ENCODE measurements at regions of chr13 and their contacts with region 1.

Region 1: GRCh38 chr13:30465585-30466357 is at the start of gene HMGB1:
- DNase-seq: peak; percentile 84 to 98 (median 96)
- ATAC-seq: peak; percentile 90
- H3K4me3 ChIP-seq: peak within 1 kb of the TSS; percentile 83
- H3K4me3 Mint-ChIP-seq: peak within 1 kb of the TSS; percentile 86 to 99 (median 94)
- H3K27ac ChIP-seq: peak within 1 kb of the TSS; percentile 97
- H3K27ac Mint-ChIP-seq: peak within 1 kb of the TSS; percentile 93 to 100 (median 98)
- H3K4me1 ChIP-seq: peaks cover 23 to 32% of the 10 kb centered on the region in 2 donors
- H3K4me1 Mint-ChIP-seq: peaks cover 12 to 40% (median 30%) of the 10 kb centered on the region in 7 donors
- H3K27me3 ChIP-seq: no peaks in the 10 kb centered on the region
- H3K27me3 Mint-ChIP-seq: peaks cover 0 to 7% (median 0%) of the 10 kb centered on the region in 5 donors
- total RNA-seq, gene HMGB1: 294 to 530 (median 319) TPM

Region 2: DNA sequence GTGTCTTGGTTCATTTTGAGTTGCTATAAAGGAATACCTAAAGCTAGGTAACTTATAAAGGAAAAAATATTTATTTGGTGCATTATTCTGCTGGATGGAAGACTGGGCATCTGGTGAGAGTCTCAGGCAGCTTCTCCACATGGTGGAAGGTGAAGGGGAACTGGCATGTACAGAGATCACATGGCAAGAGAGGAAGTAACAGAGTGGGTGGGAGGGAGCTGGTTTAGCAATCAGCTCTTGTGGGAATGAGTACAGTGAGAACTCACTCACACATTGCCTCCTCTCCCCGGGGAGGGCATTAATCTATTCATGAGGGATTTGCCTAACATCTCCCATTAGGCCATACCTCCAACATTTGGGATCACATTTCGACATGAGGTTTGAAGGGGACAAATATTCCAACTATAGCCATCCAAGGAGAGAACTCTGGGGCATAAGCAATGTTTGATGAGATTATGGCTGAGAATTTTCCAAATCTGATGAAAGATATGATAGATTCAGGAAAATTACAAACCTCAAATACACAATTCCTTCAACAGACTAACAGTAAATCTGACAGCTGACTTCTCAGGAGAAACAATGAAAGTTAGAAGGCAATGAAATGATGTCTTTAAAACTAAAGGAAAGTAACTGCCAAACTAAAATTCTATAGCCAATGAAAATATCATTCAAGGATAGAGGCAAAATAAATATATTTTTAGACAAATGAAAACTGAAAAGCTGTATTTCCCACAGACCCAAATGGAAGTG is 1593.2 kb before region 1 on chr13:
- CTCF ChIA-PET with region 1: no interaction called
- POLR2A ChIA-PET with region 1: no interaction called
- intact Hi-C with region 1: no loop called
- DNase-seq: no peak
- ATAC-seq: no peak
- H3K4me3 ChIP-seq: no peak overlapping the region
- H3K4me3 Mint-ChIP-seq: no peak overlapping the region
- H3K27ac ChIP-seq: no peak overlapping the region
- H3K27ac Mint-ChIP-seq: peak overlapping the region in 1 of 9 donors; percentile 17
- H3K4me1 ChIP-seq: no peaks in the 10 kb centered on the region
- H3K4me1 Mint-ChIP-seq: no peaks in the 10 kb centered on the region
- H3K27me3 ChIP-seq: no peaks in the 10 kb centered on the region
- H3K27me3 Mint-ChIP-seq: peaks cover 0 to 33% (median 6%) of the 10 kb centered on the region in 5 donors

Region 3: DNA sequence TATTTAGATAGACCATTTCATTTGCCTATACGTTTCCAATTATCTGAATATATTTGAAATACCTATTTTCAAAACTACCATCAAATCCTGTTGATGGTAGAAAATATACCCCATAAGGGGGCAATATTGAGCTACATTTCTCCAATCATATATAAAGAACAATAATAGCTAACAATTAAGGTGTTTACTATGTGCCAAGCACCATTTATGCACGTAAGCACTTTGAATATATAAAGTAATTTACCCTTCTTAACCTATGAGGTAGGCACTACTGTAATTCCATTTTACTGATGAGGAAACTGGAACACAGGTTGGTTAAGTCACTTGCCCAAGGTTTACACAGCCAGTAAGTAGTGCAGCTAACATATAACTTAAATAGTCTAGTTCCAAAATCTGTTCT is 694.5 kb before region 1 on chr13:
- CTCF ChIA-PET with region 1: interaction called, 4 read pairs
- POLR2A ChIA-PET with region 1: no interaction called
- intact Hi-C with region 1: loop called in 1 of 2 experiments (anchors 2 kb)
- DNase-seq: peak in 7 of 9 donors; percentile 31 to 67 (median 52)
- ATAC-seq: peak; percentile 77
- H3K4me3 ChIP-seq: no peak overlapping the region
- H3K4me3 Mint-ChIP-seq: no peak overlapping the region
- H3K27ac ChIP-seq: no peak overlapping the region
- H3K27ac Mint-ChIP-seq: peak overlapping the region in 1 of 9 donors; percentile 11
- H3K4me1 ChIP-seq: no peaks in the 10 kb centered on the region
- H3K4me1 Mint-ChIP-seq: peaks cover 0 to 14% (median 4%) of the 10 kb centered on the region in 7 donors
- H3K27me3 ChIP-seq: no peaks in the 10 kb centered on the region
- H3K27me3 Mint-ChIP-seq: no peaks in the 10 kb centered on the region

Region 4: DNA sequence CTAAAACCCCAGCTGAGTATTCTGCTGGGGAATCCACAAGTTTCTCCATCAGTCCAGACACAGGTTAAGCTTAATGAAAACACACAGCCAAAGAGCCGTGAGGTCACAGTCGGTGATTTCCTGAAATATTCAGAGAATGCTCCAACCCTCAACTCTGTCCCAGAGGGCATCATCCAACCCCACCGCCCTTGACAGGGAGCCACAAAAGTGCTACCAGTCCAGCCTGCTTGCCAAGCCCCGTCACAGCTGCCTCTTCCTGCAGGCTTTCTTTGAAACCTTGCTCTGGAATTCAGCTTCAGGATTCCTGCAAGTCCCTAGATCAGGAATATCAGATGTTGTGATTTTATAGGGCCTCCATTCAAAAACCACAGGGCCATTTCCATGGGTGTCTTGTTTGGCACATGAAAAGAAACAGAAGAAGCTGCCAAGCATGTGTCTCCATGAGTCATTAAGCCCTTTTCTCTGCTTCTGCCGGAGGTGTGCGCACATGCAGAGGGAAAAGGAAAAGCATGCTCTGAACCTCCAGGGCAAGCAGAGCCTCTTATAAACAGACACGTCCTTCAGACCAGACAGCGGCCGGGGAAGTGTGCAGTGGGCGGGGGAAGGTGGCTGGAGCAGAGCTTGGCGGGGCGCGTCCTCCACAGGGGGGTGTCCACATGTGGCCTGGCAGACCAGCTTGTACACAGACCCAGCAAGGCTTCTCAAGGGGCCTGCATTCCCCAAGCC is 323.1 kb before region 1 on chr13:
- CTCF ChIA-PET with region 1: interaction called, 5 read pairs
- POLR2A ChIA-PET with region 1: interaction called, 12 read pairs
- intact Hi-C with region 1: loop called (anchors 5 kb)
- DNase-seq: peak in 1 of 9 donors; percentile 49
- ATAC-seq: peak; percentile 41
- H3K4me3 ChIP-seq: no peak overlapping the region
- H3K4me3 Mint-ChIP-seq: peak overlapping the region in 4 of 10 donors; percentile 10 to 61 (median 29)
- H3K27ac ChIP-seq: no peak overlapping the region
- H3K27ac Mint-ChIP-seq: peak overlapping the region; percentile 45 to 93 (median 76)
- H3K4me1 ChIP-seq: peaks cover 25 to 47% of the 10 kb centered on the region in 2 donors
- H3K4me1 Mint-ChIP-seq: peaks cover 29 to 64% (median 60%) of the 10 kb centered on the region in 7 donors
- H3K27me3 ChIP-seq: no peaks in the 10 kb centered on the region
- H3K27me3 Mint-ChIP-seq: peaks cover 0 to 5% (median 0%) of the 10 kb centered on the region in 5 donors

Region 5: DNA sequence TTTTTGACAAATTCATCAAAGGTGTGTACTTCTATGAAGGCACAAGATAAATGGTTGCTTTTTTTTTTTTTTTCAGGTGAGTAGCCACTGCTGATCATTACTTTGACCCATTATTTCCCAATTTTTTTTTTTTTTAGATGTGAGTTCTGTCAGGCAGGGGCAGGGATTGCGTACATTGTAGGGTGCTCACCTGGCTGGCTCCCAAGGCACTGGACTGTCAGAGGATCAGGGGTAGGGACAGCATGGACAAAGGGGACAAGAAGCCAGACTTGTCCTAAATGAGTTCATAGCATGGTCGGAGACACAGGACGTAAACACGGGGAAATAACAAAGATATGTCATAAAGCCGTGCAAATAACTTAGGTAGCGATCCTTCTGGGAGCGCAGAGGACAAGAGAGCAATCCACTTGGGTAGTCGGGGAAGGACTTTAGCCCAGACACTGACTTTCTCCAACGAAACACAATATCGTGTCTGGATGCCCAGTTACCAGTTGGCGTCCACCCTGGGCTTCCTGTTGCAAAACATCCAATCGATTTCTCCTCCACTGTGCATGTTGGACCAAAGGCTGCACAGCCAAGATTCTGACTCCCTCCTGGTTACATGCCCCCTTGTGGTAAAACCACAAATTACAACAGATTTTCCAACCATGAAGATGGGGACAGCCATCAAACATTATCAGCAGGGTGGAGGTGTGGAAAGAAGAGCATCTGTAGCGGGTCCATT is 130.9 kb before region 1 on chr13:
- CTCF ChIA-PET with region 1: no interaction called
- POLR2A ChIA-PET with region 1: interaction called, 3 read pairs
- intact Hi-C with region 1: loop called in 1 of 2 experiments (anchors 1 kb)
- DNase-seq: peak in 5 of 9 donors; percentile 24 to 43 (median 37)
- ATAC-seq: peak; percentile 57
- H3K4me3 ChIP-seq: no peak overlapping the region
- H3K4me3 Mint-ChIP-seq: no peak overlapping the region
- H3K27ac ChIP-seq: no peak overlapping the region
- H3K27ac Mint-ChIP-seq: peak overlapping the region in 2 of 9 donors; percentile 8 to 9
- H3K4me1 ChIP-seq: peaks cover 0 to 8% of the 10 kb centered on the region in 2 donors
- H3K4me1 Mint-ChIP-seq: peaks cover 7 to 40% (median 19%) of the 10 kb centered on the region in 7 donors
- H3K27me3 ChIP-seq: no peaks in the 10 kb centered on the region
- H3K27me3 Mint-ChIP-seq: no peaks in the 10 kb centered on the region

Region 6: GRCh38 chr13:30408319-30409101 is 57.3 kb before region 1 on chr13:
- CTCF ChIA-PET with region 1: no interaction called
- POLR2A ChIA-PET with region 1: interaction called, 3 read pairs
- intact Hi-C with region 1: loop called (anchors 1 to 2 kb)
- DNase-seq: peak; percentile 78 to 89 (median 85)
- ATAC-seq: peak; percentile 97
- H3K4me3 ChIP-seq: peak overlapping the region; percentile 44
- H3K4me3 Mint-ChIP-seq: peak overlapping the region; percentile 64 to 78 (median 72)
- H3K27ac ChIP-seq: peak overlapping the region; percentile 52
- H3K27ac Mint-ChIP-seq: peak overlapping the region; percentile 51 to 87 (median 83)
- H3K4me1 ChIP-seq: peaks cover 9 to 14% of the 10 kb centered on the region in 2 donors
- H3K4me1 Mint-ChIP-seq: peaks cover 6 to 46% (median 37%) of the 10 kb centered on the region in 7 donors
- H3K27me3 ChIP-seq: no peaks in the 10 kb centered on the region
- H3K27me3 Mint-ChIP-seq: peaks cover 0 to 12% (median 0%) of the 10 kb centered on the region in 5 donors

Region 7: GRCh38 chr13:30572859-30573275 is 107.1 kb after region 1 on chr13:
- CTCF ChIA-PET with region 1: interaction called, 3 read pairs
- POLR2A ChIA-PET with region 1: interaction called, 6 read pairs
- intact Hi-C with region 1: loop called (anchors 1 to 2 kb)
- DNase-seq: peak in 7 of 9 donors; percentile 19 to 65 (median 49)
- ATAC-seq: peak; percentile 69
- H3K4me3 ChIP-seq: peak overlapping the region; percentile 55
- H3K4me3 Mint-ChIP-seq: peak overlapping the region; percentile 66 to 88 (median 81)
- H3K27ac ChIP-seq: peak overlapping the region; percentile 81
- H3K27ac Mint-ChIP-seq: peak overlapping the region; percentile 88 to 97 (median 94)
- H3K4me1 ChIP-seq: peaks cover 13 to 24% of the 10 kb centered on the region in 2 donors
- H3K4me1 Mint-ChIP-seq: peaks cover 14 to 42% (median 36%) of the 10 kb centered on the region in 7 donors
- H3K27me3 ChIP-seq: no peaks in the 10 kb centered on the region
- H3K27me3 Mint-ChIP-seq: peaks cover 0 to 3% (median 0%) of the 10 kb centered on the region in 5 donors

Region 8: GRCh38 chr13:31044377-31045285 is 578.9 kb after region 1 on chr13:
- CTCF ChIA-PET with region 1: no interaction called
- POLR2A ChIA-PET with region 1: no interaction called
- intact Hi-C with region 1: loop called in 1 of 2 experiments (anchors 1 kb)
- DNase-seq: peak; percentile 54 to 79 (median 75)
- ATAC-seq: peak; percentile 95
- H3K4me3 ChIP-seq: no peak overlapping the region
- H3K4me3 Mint-ChIP-seq: peak overlapping the region in 9 of 10 donors; percentile 19 to 81 (median 52)
- H3K27ac ChIP-seq: no peak overlapping the region
- H3K27ac Mint-ChIP-seq: peak overlapping the region in 5 of 9 donors; percentile 7 to 90 (median 46)
- H3K4me1 ChIP-seq: peaks cover 22 to 30% of the 10 kb centered on the region in 2 donors
- H3K4me1 Mint-ChIP-seq: peaks cover 22 to 52% (median 40%) of the 10 kb centered on the region in 7 donors
- H3K27me3 ChIP-seq: no peaks in the 10 kb centered on the region
- H3K27me3 Mint-ChIP-seq: peaks cover 0 to 24% (median 5%) of the 10 kb centered on the region in 5 donors